ENCODE measurements at regions of chr3 and their contacts with region 1.

Region 1: DNA sequence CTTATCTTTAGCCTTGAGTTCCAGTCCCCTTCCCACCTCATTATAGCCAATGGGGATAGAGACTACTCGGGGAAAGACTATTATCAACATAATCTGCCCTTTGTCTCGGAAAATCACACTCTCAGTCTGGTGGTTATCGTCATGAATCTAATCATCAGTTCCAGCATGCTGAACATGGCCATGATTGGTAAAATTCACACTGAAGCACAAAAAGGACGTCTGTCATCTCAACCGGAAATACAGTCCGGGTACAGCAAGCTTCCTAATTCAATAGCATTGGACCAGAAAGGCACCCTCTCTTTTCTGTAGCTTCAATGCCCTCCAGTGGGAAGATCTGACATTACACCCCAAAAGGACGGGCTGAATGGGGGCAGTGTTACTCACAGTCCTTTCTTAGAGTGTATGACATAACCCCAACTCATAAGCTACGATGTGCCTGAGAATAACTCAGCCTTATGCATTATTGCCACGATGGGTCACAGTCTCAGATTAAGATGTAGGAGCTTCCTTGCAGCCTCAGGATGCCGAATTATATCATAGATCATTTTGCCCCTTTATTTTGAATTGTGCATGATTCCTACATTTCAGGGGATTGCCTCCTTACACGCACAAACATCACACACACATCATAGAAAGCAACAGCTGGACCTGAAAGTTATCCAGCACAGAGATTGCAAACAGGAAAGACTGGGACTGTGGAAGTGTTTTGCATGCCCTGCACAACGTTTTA is 390.4 kb upstream of the LMCD1 start:
- DNase-seq: peak; percentile 63
- ATAC-seq: peak; percentile 98
- H3K4me3 ChIP-seq: no peak overlapping the region
- H3K27ac ChIP-seq: no peak overlapping the region
- H3K4me1 ChIP-seq: 0 out of 4 replicates have a peak, but pooled peaks cover 0 to 3% of the 10 kb centered on the region in 2 experiments
- H3K27me3 ChIP-seq: no peaks in the 10 kb centered on the region
- CTCF ChIP-seq: peak; percentile 79 to 92 (median 84)
- POLR2A ChIP-seq: no peak
- RAD21 ChIP-seq: peak; percentile 97

Region 2: GRCh38 chr3:7393944-7394605 is 717.2 kb before region 1 on chr3:
- CTCF ChIA-PET with region 1: interaction called, 6 read pairs
- POLR2A ChIA-PET with region 1: no interaction called
- RAD21 ChIA-PET with region 1: no interaction called
- intact Hi-C with region 1: loop called (anchors 2 kb)
- DNase-seq: no peak
- ATAC-seq: no peak
- H3K4me3 ChIP-seq: no peak overlapping the region
- H3K27ac ChIP-seq: no peak overlapping the region
- H3K4me1 ChIP-seq: no peaks in the 10 kb centered on the region
- H3K27me3 ChIP-seq: no peaks in the 10 kb centered on the region
- CTCF ChIP-seq: no peak
- POLR2A ChIP-seq: no peak
- RAD21 ChIP-seq: no peak

Region 3: DNA sequence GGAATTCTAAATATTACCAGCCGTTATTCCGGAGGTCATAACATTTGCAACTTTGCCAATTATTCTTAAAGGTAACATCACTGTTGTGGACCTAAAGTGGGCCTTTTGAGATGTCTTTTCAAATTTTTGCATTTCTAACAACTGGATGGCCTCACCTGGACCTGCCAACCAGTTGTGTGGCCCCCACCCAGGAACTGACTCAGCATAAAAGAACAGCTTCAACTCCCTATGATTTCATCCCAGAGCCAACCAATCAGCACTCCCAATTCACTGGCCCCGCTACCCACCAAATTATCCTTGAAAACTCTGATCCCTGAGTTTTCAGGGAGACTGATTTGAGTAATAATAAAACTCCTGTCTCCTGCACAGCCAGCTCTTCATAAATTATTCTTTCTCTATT is 99.3 kb before region 1 on chr3:
- CTCF ChIA-PET with region 1: no interaction called
- POLR2A ChIA-PET with region 1: no interaction called
- RAD21 ChIA-PET with region 1: no interaction called
- intact Hi-C with region 1: no loop called
- DNase-seq: no peak
- ATAC-seq: no peak
- H3K4me3 ChIP-seq: no peak overlapping the region
- H3K27ac ChIP-seq: no peak overlapping the region
- H3K4me1 ChIP-seq: no peaks in the 10 kb centered on the region
- H3K27me3 ChIP-seq: no peaks in the 10 kb centered on the region
- CTCF ChIP-seq: no peak
- POLR2A ChIP-seq: no peak
- RAD21 ChIP-seq: no peak

Region 4: GRCh38 chr3:8095724-8096123 is 15.5 kb before region 1 on chr3:
- CTCF ChIA-PET with region 1: interaction called, 10 read pairs
- POLR2A ChIA-PET with region 1: no interaction called
- RAD21 ChIA-PET with region 1: no interaction called
- intact Hi-C with region 1: no loop called
- DNase-seq: peak; percentile 34
- ATAC-seq: peak; percentile 96
- H3K4me3 ChIP-seq: no peak overlapping the region
- H3K27ac ChIP-seq: no peak overlapping the region
- H3K4me1 ChIP-seq: peaks cover 2 to 5% of the 10 kb centered on the region in 2 experiments; a peak in 1 of 4 replicates
- H3K27me3 ChIP-seq: no peaks in the 10 kb centered on the region
- CTCF ChIP-seq: peak; percentile 28 to 48 (median 47); a peak in 5 of 6 replicates
- POLR2A ChIP-seq: no peak
- RAD21 ChIP-seq: peak; percentile 45

Region 5: GRCh38 chr3:8301728-8302462 is 190.7 kb after region 1 on chr3:
- CTCF ChIA-PET with region 1: no interaction called
- POLR2A ChIA-PET with region 1: no interaction called
- RAD21 ChIA-PET with region 1: no interaction called
- intact Hi-C with region 1: loop called (anchors 5 kb)
- DNase-seq: peak; percentile 35
- ATAC-seq: peak; percentile 77
- H3K4me3 ChIP-seq: no peak overlapping the region
- H3K27ac ChIP-seq: no peak overlapping the region
- H3K4me1 ChIP-seq: no peaks in the 10 kb centered on the region
- H3K27me3 ChIP-seq: 0 out of 2 replicates have a peak, but pooled peaks cover 3% of the 10 kb centered on the region
- CTCF ChIP-seq: peak; percentile 39 to 77 (median 65); a peak in 5 of 6 replicates
- POLR2A ChIP-seq: no peak
- RAD21 ChIP-seq: peak; percentile 72

Region 6: DNA sequence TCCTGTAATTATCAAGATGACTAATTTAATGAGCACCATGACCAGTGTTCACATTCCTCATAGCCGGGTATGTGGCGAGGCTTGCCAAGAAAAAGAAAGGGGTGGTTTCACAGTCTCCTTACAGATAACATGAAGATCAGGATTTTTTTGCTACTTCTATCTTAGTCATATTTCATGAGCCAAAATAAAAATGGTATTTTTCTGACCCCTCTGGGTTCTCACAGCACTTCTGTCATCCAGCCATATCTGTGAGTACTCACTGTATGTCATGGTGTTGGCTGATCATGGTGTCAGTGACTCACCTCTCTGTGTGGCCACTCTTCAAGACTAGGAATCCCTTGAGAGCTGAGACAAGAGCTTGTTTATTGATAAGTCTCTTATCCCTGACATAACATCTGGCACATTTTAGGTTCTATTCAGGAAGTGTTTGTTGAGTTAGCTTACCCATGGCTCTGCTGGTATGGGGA is 259.9 kb after region 1 on chr3:
- CTCF ChIA-PET with region 1: no interaction called
- POLR2A ChIA-PET with region 1: no interaction called
- RAD21 ChIA-PET with region 1: no interaction called
- intact Hi-C with region 1: no loop called
- DNase-seq: no peak
- ATAC-seq: no peak
- H3K4me3 ChIP-seq: no peak overlapping the region
- H3K27ac ChIP-seq: no peak overlapping the region
- H3K4me1 ChIP-seq: no peaks in the 10 kb centered on the region
- H3K27me3 ChIP-seq: peaks cover 17% of the 10 kb centered on the region; the same call in 1 of the 2 replicates
- CTCF ChIP-seq: no peak
- POLR2A ChIP-seq: no peak
- RAD21 ChIP-seq: no peak